ENCODE measurements at regions of chr14 and their contacts with region 1.

Region 1: GRCh38 chr14:64510825-64511671 is 6.5 kb downstream of the ZBTB1 start:
- DNase-seq: peak; percentile 36 to 88 (median 56)
- ATAC-seq: peak; percentile 63
- H3K4me3 ChIP-seq: no peak overlapping the region
- H3K4me3 Mint-ChIP-seq: peak overlapping the region; percentile 43
- H3K27ac ChIP-seq: peak overlapping the region in 1 of 2 donors; percentile 27
- H3K27ac Mint-ChIP-seq: peak overlapping the region; percentile 100
- H3K4me1 ChIP-seq: peaks cover 56% of the 10 kb centered on the region
- H3K4me1 Mint-ChIP-seq: peaks cover 93% of the 10 kb centered on the region
- H3K27me3 ChIP-seq: no peaks in the 10 kb centered on the region
- H3K27me3 Mint-ChIP-seq: no peaks in the 10 kb centered on the region
- CTCF ChIP-seq: peak; percentile 88

Region 2: GRCh38 chr14:64324895-64325294 is 186.2 kb before region 1 on chr14:
- CTCF ChIA-PET with region 1: no interaction called
- POLR2A ChIA-PET with region 1: no interaction called
- intact Hi-C with region 1: no loop called
- DNase-seq: no peak
- ATAC-seq: no peak
- H3K4me3 ChIP-seq: no peak overlapping the region
- H3K4me3 Mint-ChIP-seq: no peak overlapping the region
- H3K27ac ChIP-seq: no peak overlapping the region
- H3K27ac Mint-ChIP-seq: no peak overlapping the region
- H3K4me1 ChIP-seq: no peaks in the 10 kb centered on the region
- H3K4me1 Mint-ChIP-seq: no peaks in the 10 kb centered on the region
- H3K27me3 ChIP-seq: no peaks in the 10 kb centered on the region
- H3K27me3 Mint-ChIP-seq: peaks cover 12% of the 10 kb centered on the region
- CTCF ChIP-seq: no peak

Region 3: GRCh38 chr14:64434528-64434927 is 76.5 kb before region 1 on chr14:
- CTCF ChIA-PET with region 1: interaction called, 16 read pairs
- POLR2A ChIA-PET with region 1: interaction called, 10 read pairs
- intact Hi-C with region 1: loop called (anchors 1 kb)
- DNase-seq: no peak
- ATAC-seq: no peak
- H3K4me3 ChIP-seq: no peak overlapping the region
- H3K4me3 Mint-ChIP-seq: no peak overlapping the region
- H3K27ac ChIP-seq: no peak overlapping the region
- H3K27ac Mint-ChIP-seq: no peak overlapping the region
- H3K4me1 ChIP-seq: no peaks in the 10 kb centered on the region
- H3K4me1 Mint-ChIP-seq: peaks cover 10% of the 10 kb centered on the region
- H3K27me3 ChIP-seq: no peaks in the 10 kb centered on the region
- H3K27me3 Mint-ChIP-seq: no peaks in the 10 kb centered on the region
- CTCF ChIP-seq: no peak

Region 4: DNA sequence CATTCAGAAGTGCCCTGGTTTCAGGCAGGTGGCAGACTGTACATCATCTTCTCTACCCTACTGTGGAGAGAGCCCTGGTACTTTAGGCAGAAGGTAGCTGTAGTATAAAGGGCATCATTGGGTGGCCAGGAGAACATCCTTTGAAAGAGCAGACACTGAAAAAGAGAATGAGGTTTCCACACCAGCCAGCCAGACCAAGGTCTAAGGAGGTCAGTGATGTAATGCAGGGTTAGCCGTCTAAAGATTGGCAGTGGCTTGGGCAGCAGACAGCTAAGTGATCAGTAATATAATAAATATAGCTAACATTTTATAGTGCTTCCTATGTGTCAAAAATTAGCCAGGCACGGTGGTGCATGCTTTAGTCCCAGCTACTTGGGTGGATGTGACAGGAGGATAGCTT is 19.4 kb before region 1 on chr14:
- CTCF ChIA-PET with region 1: interaction called, 55 read pairs
- POLR2A ChIA-PET with region 1: interaction called, 112 read pairs
- intact Hi-C with region 1: no loop called
- DNase-seq: no peak
- ATAC-seq: no peak
- H3K4me3 ChIP-seq: no peak overlapping the region
- H3K4me3 Mint-ChIP-seq: peak overlapping the region; percentile 38
- H3K27ac ChIP-seq: no peak overlapping the region
- H3K27ac Mint-ChIP-seq: peak overlapping the region; percentile 22
- H3K4me1 ChIP-seq: peaks cover 23% of the 10 kb centered on the region
- H3K4me1 Mint-ChIP-seq: peaks cover 66% of the 10 kb centered on the region
- H3K27me3 ChIP-seq: no peaks in the 10 kb centered on the region
- H3K27me3 Mint-ChIP-seq: no peaks in the 10 kb centered on the region
- CTCF ChIP-seq: no peak

Region 5: GRCh38 chr14:64522591-64523355 is 11.7 kb after region 1 on chr14:
- CTCF ChIA-PET with region 1: interaction called, 18 read pairs
- POLR2A ChIA-PET with region 1: interaction called, 3 read pairs
- intact Hi-C with region 1: no loop called
- DNase-seq: no peak
- ATAC-seq: no peak
- H3K4me3 ChIP-seq: no peak overlapping the region
- H3K4me3 Mint-ChIP-seq: no peak overlapping the region
- H3K27ac ChIP-seq: no peak overlapping the region
- H3K27ac Mint-ChIP-seq: no peak overlapping the region
- H3K4me1 ChIP-seq: peaks cover 5% of the 10 kb centered on the region
- H3K4me1 Mint-ChIP-seq: peaks cover 29% of the 10 kb centered on the region
- H3K27me3 ChIP-seq: no peaks in the 10 kb centered on the region
- H3K27me3 Mint-ChIP-seq: no peaks in the 10 kb centered on the region
- CTCF ChIP-seq: no peak

Measured in CD4-positive, alpha-beta T cell (primary cell).